H1 (cell line): ENCODE measurements at regions of chr16 and their contacts with region 1.

Region 1: DNA sequence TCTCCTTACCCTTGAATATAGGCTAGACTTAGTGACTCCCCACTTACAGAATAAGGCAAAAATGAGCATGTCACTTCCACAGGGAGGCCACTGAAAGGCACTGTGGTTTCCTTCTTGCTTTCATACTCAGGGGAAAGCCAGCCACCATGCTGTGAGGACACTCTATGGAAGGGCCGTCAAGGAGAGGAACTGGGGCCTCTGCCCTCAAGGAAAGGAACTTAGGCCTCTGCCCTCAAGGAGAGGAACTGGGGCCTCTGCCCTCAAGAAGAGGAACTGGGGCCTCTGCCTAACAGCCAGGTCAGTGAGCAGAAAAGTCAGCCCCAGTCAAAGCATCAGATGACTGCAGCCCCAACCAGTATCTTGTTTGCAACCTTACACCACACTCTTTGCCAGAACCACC is 30.1 kb downstream of the VPS35 start:
- DNase-seq: no peak
- H3K4me3 ChIP-seq: no peak overlapping the region
- H3K27ac ChIP-seq: no peak overlapping the region
- H3K4me1 ChIP-seq: no peaks in the 10 kb centered on the region
- H3K27me3 ChIP-seq: no peaks in the 10 kb centered on the region
- CTCF ChIP-seq: no peak
- EP300 ChIP-seq: no peak
- POLR2A ChIP-seq: no peak
- RAD21 ChIP-seq: no peak

Region 2: DNA sequence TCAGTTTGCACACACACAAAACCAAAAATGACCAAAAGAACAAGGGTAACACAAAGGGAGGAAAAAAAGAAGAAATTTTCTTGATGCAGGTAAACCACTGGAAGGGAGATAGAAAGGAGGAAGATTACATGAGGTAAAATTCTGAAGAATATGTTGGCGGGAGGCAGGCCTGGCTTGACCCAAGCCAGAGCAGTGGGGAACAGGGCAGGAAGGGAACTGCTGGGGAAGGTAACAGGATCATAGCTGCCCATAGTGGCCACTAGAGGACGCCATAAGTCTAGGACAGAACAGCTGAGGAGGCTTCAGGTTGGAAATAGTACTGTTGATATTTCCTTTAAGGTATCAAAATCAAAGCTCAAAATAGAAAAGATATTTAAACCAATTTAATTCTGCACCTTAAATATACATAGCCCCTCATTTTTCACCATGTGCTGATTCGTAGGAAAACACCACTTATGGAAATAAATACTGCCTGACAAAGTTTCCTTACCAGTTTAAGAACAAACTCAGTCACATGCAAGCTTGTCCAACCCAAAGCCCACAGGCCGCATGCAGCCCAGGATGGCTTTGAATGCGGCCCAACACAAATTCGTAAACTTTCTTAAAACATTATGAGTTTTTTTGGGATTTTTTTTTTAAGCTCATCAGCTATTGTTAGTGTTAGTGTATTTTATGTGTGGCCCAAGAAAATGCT is 14.5 kb after region 1 on chr16:
- CTCF ChIA-PET with region 1: interaction called, 16 read pairs
- POLR2A ChIA-PET with region 1: interaction called, 4 read pairs
- DNase-seq: peak in 1 of 2 experiments; percentile 58
- H3K4me3 ChIP-seq: no peak overlapping the region
- H3K27ac ChIP-seq: no peak overlapping the region
- H3K4me1 ChIP-seq: no peaks in the 10 kb centered on the region
- H3K27me3 ChIP-seq: no peaks in the 10 kb centered on the region
- CTCF ChIP-seq: peak; percentile 89 to 97 (median 91)
- EP300 ChIP-seq: no peak
- POLR2A ChIP-seq: no peak
- RAD21 ChIP-seq: peak; percentile 87 to 89